OCI-LY7 (cell line): ENCODE measurements at regions of chr10 and their contacts with region 1.

Region 1: GRCh38 chr10:95374597-95375209 is 83.9 kb upstream of the PDLIM1 start:
- DNase-seq: peak; percentile 83
- H3K4me3 ChIP-seq: no peak overlapping the region
- H3K27ac ChIP-seq: no peak overlapping the region
- H3K4me1 ChIP-seq: no peaks in the 10 kb centered on the region
- CTCF ChIP-seq: peak; percentile 95

Region 2: GRCh38 chr10:95423164-95424005 is 48.7 kb after region 1 on chr10:
- CTCF ChIA-PET with region 1: no interaction called
- POLR2A ChIA-PET with region 1: no interaction called
- intact Hi-C with region 1: no loop called
- DNase-seq: no peak
- H3K4me3 ChIP-seq: no peak overlapping the region
- H3K27ac ChIP-seq: no peak overlapping the region
- H3K4me1 ChIP-seq: no peaks in the 10 kb centered on the region
- CTCF ChIP-seq: no peak

Region 3: GRCh38 chr10:95445837-95446486 is 71.3 kb after region 1 on chr10:
- CTCF ChIA-PET with region 1: no interaction called
- POLR2A ChIA-PET with region 1: no interaction called
- intact Hi-C with region 1: loop called (anchors 5 kb)
- DNase-seq: peak; percentile 58
- H3K4me3 ChIP-seq: no peak overlapping the region
- H3K27ac ChIP-seq: no peak overlapping the region
- H3K4me1 ChIP-seq: no peaks in the 10 kb centered on the region
- CTCF ChIP-seq: peak; percentile 83

Region 4: DNA sequence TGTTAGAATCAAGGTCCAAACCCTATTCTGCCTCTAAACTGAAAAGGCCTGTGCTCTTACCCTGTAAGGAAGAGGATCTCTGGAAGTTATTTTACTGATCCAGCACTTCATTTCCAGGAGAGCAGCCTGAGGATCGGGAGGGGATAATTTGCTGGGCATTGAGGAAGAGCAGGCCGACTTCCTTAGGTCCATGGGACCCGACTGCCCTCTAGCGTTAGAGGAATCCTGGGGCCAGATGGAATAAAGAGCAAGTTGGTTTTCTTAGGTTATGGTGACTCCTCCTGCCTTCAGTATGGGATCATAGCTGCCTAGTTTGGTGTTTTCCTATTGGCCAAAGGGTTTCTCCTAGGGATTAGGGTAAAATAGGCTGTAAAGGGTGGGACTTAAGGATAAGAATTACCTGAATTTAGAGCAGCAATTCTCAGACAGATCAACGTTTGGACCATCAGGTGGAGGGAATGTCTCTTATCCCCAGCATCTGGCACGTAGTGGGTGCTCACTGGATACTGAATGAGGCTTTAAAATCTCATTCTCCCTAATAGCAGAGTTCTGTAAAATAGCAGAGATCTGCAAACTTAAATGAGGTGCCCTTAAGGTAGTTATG is 226.5 kb after region 1 on chr10:
- CTCF ChIA-PET with region 1: no interaction called
- POLR2A ChIA-PET with region 1: interaction called, 3 read pairs
- intact Hi-C with region 1: loop called (anchors 2 kb)
- DNase-seq: peak; percentile 68
- H3K4me3 ChIP-seq: no peak overlapping the region
- H3K27ac ChIP-seq: no peak overlapping the region
- H3K4me1 ChIP-seq: no peaks in the 10 kb centered on the region
- CTCF ChIP-seq: peak; percentile 95